ENCODE measurements at regions of chr12 and their contacts with region 1.

Region 1: DNA sequence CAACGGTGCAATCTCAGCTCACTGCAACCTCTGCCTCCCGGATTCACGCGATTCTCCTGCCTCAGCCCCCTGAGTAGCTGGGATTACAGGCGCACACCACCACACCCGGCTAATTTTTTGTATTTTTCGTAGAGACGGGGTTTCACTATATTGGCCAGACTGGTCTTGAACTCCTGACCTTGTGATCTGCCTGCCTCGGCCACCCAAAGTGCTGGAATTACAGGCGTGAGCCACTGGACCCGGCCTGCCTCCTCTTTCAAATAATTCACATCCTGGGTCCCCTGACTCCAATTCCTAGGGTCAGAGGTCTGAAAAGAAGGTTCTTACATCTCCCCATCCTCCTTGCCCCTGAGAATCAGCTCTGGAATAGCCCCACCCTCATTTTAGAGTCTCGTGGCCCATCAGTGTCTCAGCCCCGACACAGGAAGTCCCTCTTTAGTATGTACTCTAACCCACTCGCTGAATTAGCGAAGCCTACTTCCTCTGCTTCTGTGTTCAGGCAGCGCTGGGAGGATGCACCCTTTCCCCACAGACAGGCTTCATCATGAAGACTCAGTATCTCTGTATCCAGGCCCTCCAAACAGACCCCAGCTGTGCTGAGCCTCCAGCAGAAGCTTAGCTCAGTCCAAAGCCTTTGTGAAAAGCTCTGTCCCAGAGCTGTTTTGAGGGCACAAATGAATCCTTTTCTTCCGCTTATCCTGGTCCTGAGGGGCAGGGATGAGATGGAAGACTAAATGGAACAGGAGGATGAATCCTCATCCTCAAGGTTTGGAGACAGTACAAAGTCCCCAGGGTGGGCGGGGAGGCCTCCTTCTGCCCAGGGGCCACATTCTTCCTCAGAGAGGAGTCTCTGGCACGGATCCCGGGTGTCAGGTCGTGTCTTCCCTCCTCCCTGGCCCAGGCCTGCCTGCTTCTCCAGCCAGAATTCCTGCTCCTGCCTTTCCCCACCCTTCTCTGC is 3.5 kb downstream of the LPAR5 start:
- DNase-seq: peak; percentile 75
- H3K4me3 Mint-ChIP-seq: peak overlapping the region; percentile 70
- H3K27ac Mint-ChIP-seq: peak overlapping the region; percentile 95
- H3K4me1 Mint-ChIP-seq: peaks cover 66% of the 10 kb centered on the region
- H3K27me3 Mint-ChIP-seq: no peaks in the 10 kb centered on the region

Region 2: GRCh38 chr12:6620137-6620884 is 12.0 kb before region 1 on chr12:
- CTCF ChIA-PET with region 1: interaction called, 16 read pairs
- POLR2A ChIA-PET with region 1: no interaction called
- DNase-seq: peak; percentile 57
- H3K4me3 Mint-ChIP-seq: no peak overlapping the region
- H3K27ac Mint-ChIP-seq: peak overlapping the region; percentile 78
- H3K4me1 Mint-ChIP-seq: peaks cover 25% of the 10 kb centered on the region
- H3K27me3 Mint-ChIP-seq: no peaks in the 10 kb centered on the region

Region 3: DNA sequence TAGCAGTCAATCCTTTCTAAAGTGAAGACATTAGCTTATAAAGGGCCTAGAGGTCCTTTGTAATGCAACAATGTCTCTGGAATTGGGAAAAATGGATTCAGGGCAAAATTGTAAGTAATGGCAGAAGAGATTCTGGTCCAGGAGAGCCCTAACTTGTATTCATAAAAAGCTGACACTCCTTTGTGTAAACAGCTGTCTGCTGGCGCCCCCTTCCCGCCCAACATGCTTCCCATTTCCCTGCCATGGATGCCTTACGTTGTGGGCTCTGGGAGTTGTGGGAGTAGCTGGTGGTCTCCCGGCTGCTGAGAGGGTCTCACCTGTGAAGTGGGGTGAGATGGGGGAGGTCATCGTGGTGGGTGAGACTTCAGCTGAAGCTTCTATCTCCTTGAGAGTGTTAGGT is 12.6 kb after region 1 on chr12:
- CTCF ChIA-PET with region 1: interaction called, 13 read pairs
- POLR2A ChIA-PET with region 1: no interaction called
- DNase-seq: no peak
- H3K4me3 Mint-ChIP-seq: no peak overlapping the region
- H3K27ac Mint-ChIP-seq: peak overlapping the region; percentile 19
- H3K4me1 Mint-ChIP-seq: peaks cover 12% of the 10 kb centered on the region
- H3K27me3 Mint-ChIP-seq: peaks cover 15% of the 10 kb centered on the region